ENCODE measurements at regions of chr17 and their contacts with region 1.

Region 1: DNA sequence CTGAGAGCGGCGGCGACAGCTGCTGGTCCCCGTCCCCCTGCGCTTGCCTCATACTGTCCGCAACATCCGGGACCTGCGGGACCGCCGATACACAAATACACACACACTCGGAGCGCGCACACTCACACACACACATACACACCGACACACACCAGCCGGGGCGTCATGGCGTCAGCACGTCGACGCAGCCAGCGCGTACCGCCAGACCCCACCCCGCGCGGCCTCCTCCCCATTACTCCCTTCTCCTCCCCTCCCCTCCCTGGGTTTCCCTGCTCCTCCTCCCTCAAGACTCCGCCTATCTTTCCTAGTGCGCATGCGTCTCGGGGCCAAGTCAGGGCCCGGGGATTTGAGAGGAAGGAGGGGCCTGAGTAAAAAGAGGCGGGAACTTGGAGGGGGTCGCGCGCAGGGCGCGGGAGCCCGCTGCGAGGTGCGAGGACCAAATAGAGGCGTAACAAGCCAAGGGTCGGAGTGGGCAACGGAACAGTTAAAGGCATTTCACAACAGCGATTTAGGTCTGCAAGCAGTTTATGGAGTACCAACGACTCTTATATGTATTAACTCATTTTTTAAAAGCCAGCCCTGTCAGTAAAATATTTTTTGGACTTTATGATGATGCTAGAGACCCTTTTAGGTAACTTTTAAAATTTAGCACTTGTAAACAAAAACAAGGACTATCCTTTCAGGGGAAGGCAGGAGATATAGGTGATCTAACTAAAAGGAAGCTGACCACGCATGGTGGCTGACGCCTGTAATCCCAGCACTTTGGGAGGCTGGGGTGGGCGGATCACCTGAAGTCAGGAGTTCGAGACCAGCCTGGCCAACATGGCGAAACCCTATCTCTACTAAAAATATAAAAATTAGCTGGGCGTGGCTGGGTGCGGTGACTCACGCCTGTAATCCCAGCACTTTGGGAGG is at the start of gene SPOP:
- DNase-seq: peak; percentile 100
- H3K4me3 Mint-ChIP-seq: peak within 1 kb of the TSS; percentile 95
- H3K27ac Mint-ChIP-seq: peak within 1 kb of the TSS; percentile 99
- H3K4me1 Mint-ChIP-seq: peaks cover 44% of the 10 kb centered on the region
- H3K27me3 Mint-ChIP-seq: peaks cover 7% of the 10 kb centered on the region
- total RNA-seq, gene SPOP: 56.0 and 61.4 TPM in 2 replicates

Region 2: GRCh38 chr17:49575579-49576087 is 102.6 kb before region 1 on chr17 and contains the start of gene NXPH3:
- intact Hi-C with region 1: loop called (anchors 5 kb)
- DNase-seq: peak; percentile 93
- H3K4me3 Mint-ChIP-seq: peak within 1 kb of the TSS; percentile 71
- H3K27ac Mint-ChIP-seq: peak within 1 kb of the TSS; percentile 35
- H3K4me1 Mint-ChIP-seq: peaks cover 15% of the 10 kb centered on the region
- H3K27me3 Mint-ChIP-seq: peaks cover 63% of the 10 kb centered on the region
- total RNA-seq, gene NXPH3: not detected in 2 replicates

Region 3: DNA sequence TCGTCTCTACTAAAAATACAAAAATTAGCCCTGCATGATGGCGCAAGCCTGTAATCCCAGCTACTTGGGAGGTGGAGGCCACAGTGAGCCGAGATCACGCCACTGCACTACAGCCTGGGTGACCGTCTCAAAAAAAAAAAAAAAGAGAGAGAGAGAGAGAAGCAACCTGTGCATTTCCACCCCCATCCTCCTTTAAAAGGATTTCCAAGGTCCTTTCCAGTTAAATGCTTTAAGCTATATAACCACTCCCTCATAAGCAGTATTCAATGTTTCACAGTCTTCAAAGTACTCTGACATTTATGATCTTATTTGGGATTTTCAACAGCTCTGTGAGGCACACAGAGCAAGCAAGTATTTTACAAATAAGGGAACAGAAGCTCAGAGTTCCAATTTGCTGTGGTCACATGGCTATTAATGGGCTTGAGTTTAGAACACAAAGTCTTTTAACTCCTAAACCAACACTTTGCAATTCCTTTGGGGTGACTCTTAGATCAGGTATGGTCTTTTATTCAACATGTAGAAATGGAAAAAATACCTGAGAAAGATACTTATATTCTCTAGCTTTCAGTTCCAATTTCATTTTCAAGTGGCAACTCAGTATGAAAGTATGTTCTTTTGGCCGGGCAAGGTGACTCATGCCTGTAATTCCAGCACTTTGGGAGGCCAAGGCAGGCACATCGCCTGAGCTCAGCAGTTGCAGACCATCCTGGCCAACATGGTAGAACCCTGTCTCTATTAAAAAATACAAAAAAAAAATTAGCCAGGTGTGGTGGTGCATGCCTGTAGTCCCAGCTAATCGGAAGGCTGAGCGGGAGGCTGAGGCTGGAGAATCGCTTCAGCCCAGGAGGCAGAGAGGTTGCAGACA is 31.6 kb before region 1 on chr17:
- intact Hi-C with region 1: loop called (anchors 2 kb)
- DNase-seq: peak; percentile 76
- H3K4me3 Mint-ChIP-seq: peak overlapping the region; percentile 58
- H3K27ac Mint-ChIP-seq: peak overlapping the region; percentile 80
- H3K4me1 Mint-ChIP-seq: peaks cover 31% of the 10 kb centered on the region
- H3K27me3 Mint-ChIP-seq: no peaks in the 10 kb centered on the region

Measured in activated CD4-positive, alpha-beta T cell treated with anti-CD3 and anti-CD28 coated beads, Interleukin-2, amount 10 ng/mL, durations not matched to agents 24 days and 14 days (primary cell).